Prostate gland (tissue), 2 donors: ENCODE measurements at regions of chr3 and their contacts with region 1.

Region 1: DNA sequence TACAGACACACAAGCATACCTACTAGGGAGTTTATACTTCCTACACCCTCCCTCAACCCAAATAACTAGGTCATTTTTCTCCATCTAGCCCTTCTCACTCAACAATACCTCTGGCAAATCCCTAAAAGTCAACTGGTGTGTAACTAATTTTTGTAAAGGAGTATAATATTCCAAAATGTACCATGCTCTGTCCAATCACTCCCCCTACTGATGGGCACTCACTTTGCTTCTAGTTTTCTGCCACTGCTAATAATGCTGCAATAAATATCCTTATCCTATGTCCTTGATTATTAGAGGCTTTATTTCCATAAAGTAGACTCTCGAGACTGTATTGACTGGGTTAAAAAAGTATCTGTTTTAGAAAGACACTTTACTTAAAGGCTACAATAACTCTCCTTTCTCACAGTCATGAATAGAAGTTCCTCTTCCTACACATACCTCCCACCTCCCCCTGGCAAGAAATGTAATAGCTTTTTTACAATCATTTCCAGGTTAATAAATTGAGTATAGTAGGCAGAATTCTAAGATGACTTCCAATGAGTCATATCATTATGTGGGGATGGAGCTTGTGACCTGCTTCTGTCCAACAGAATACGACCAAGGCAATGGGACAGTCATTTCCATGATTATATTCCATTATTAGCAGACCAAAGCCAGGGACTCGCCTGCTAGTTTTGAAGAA is 30.0 kb downstream of the SHQ1 start:
- DNase-seq: peak; percentile 10
- H3K4me3 ChIP-seq: no peak overlapping the region
- H3K27ac ChIP-seq: no peak overlapping the region
- H3K4me1 ChIP-seq: peaks cover 7% of the 10 kb centered on the region
- H3K27me3 ChIP-seq: no peaks in the 10 kb centered on the region
- CTCF ChIP-seq: peak in 3 of 4 experiments; percentile 20 to 79 (median 79)
- POLR2A ChIP-seq: no peak

Region 2: GRCh38 chr3:71725279-71725991 is 1092.8 kb before region 1 on chr3 and contains the start of gene EIF4E3:
- intact Hi-C with region 1: loop called (anchors 5 kb)
- DNase-seq: peak; percentile 12
- H3K4me3 ChIP-seq: peak within 1 kb of the TSS; percentile 75 to 77
- H3K27ac ChIP-seq: peak within 1 kb of the TSS; percentile 68 to 77
- H3K4me1 ChIP-seq: no peaks in the 10 kb centered on the region
- H3K27me3 ChIP-seq: no peaks in the 10 kb centered on the region
- CTCF ChIP-seq: no peak
- POLR2A ChIP-seq: no peak
- total RNA-seq, gene EIF4E3: 19.2 to 26.0 TPM

Region 3: GRCh38 chr3:71955240-71956068 is 862.8 kb before region 1 on chr3:
- intact Hi-C with region 1: loop called (anchors 5 kb)
- DNase-seq: peak; percentile 67
- H3K4me3 ChIP-seq: no peak overlapping the region
- H3K27ac ChIP-seq: no peak overlapping the region
- H3K4me1 ChIP-seq: no peaks in the 10 kb centered on the region
- H3K27me3 ChIP-seq: no peaks in the 10 kb centered on the region
- CTCF ChIP-seq: peak; percentile 58 to 78 (median 69)
- POLR2A ChIP-seq: no peak

Region 4: DNA sequence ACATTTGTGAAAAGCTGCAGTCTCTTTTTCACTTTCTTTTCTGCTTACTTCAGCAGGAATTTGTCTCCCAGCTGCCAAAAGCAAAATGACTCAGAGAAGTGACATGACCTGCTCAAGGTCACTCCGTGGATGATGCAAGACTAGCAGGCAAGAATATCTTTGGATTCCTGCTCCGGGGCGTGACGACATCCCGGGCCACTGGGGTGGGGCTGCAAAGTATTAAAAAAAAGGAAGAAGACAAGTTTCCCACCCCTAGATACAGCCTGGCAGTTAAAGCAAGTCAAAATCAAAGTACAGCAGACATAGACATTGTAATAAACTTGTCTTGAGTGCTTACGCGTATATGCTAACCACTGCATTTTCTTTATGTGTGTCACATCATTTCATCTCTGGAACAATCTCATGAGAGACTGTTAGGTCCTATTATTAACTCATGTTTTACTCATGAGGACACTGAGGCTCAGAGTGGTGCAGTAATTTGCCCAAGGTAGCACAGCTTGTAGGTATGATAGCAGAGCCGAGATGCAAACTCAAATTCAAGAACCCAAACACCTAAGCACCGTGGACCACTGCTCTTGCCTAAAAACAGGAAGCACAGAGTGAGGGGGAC is 548.1 kb before region 1 on chr3:
- intact Hi-C with region 1: loop called (anchors 10 kb)
- DNase-seq: peak; percentile 65
- H3K4me3 ChIP-seq: no peak overlapping the region
- H3K27ac ChIP-seq: no peak overlapping the region
- H3K4me1 ChIP-seq: peaks cover 2% of the 10 kb centered on the region
- H3K27me3 ChIP-seq: no peaks in the 10 kb centered on the region
- CTCF ChIP-seq: no peak
- POLR2A ChIP-seq: no peak

Region 5: GRCh38 chr3:72665701-72666443 is 152.4 kb before region 1 on chr3:
- intact Hi-C with region 1: loop called (anchors 10 kb)
- DNase-seq: peak; percentile 33
- H3K4me3 ChIP-seq: no peak overlapping the region
- H3K27ac ChIP-seq: no peak overlapping the region
- H3K4me1 ChIP-seq: no peaks in the 10 kb centered on the region
- H3K27me3 ChIP-seq: no peaks in the 10 kb centered on the region
- CTCF ChIP-seq: peak in 3 of 4 experiments; percentile 48 to 54 (median 50)
- POLR2A ChIP-seq: no peak